ENCODE measurements at regions of chr6 and their contacts with region 1.

Region 1: GRCh38 chr6:167501781-167502385 is 177.0 kb downstream of the TTLL2 start:
- DNase-seq: peak; percentile 33
- ATAC-seq: peak; percentile 92
- H3K4me3 ChIP-seq: no peak overlapping the region
- H3K27ac ChIP-seq: no peak overlapping the region
- H3K4me1 ChIP-seq: no peaks in the 10 kb centered on the region
- H3K27me3 ChIP-seq: peaks cover 5% of the 10 kb centered on the region; the same call in 1 of the 2 replicates
- CTCF ChIP-seq: peak; percentile 51 to 60 (median 56); a peak in 5 of 6 replicates
- POLR2A ChIP-seq: no peak
- RAD21 ChIP-seq: peak; percentile 84

Region 2: GRCh38 chr6:167898673-167899311 is 396.9 kb after region 1 on chr6:
- CTCF ChIA-PET with region 1: no interaction called
- POLR2A ChIA-PET with region 1: no interaction called
- RAD21 ChIA-PET with region 1: interaction called in 1 of 2 experiments, 3 read pairs
- intact Hi-C with region 1: loop called (anchors 1 kb)
- DNase-seq: no peak
- ATAC-seq: peak; percentile 54; the same call in 1 of the 2 replicates
- H3K4me3 ChIP-seq: no peak overlapping the region
- H3K27ac ChIP-seq: no peak overlapping the region
- H3K4me1 ChIP-seq: no peaks in the 10 kb centered on the region
- H3K27me3 ChIP-seq: no peaks in the 10 kb centered on the region
- CTCF ChIP-seq: peak; percentile 57 to 79 (median 62); a peak in 5 of 6 replicates
- POLR2A ChIP-seq: no peak
- RAD21 ChIP-seq: peak; percentile 82

Region 3: DNA sequence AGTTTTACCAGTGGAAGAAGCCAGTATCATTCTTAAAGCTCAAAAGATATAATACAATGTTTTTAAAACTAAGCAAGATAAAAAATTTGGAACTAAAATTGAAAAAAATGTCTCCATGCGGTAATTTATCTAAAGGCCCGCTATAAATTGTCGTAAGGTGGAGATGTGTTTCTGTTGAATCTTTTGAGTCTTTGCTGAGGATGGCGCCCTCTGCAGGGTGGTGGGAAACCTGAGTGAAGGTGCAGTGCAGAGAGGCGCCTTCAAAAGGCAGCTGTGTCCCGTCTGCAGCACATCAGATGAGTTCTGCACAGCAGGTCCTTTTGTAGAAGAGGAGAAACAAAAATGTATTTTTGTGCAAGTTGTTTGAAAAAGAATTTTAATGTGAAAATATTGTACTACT is 466.2 kb after region 1 on chr6:
- CTCF ChIA-PET with region 1: no interaction called
- POLR2A ChIA-PET with region 1: no interaction called
- RAD21 ChIA-PET with region 1: no interaction called
- intact Hi-C with region 1: loop called (anchors 5 kb)
- DNase-seq: peak; percentile 16
- ATAC-seq: peak; percentile 87
- H3K4me3 ChIP-seq: no peak overlapping the region
- H3K27ac ChIP-seq: no peak overlapping the region
- H3K4me1 ChIP-seq: no peaks in the 10 kb centered on the region
- H3K27me3 ChIP-seq: no peaks in the 10 kb centered on the region
- CTCF ChIP-seq: peak; percentile 40 to 89 (median 82); a peak in 4 of 6 replicates
- POLR2A ChIP-seq: no peak
- RAD21 ChIP-seq: peak; percentile 43

Measured in HCT116 (cell line).